ENCODE measurements at regions of chr7 and their contacts with region 1.

Region 1: DNA sequence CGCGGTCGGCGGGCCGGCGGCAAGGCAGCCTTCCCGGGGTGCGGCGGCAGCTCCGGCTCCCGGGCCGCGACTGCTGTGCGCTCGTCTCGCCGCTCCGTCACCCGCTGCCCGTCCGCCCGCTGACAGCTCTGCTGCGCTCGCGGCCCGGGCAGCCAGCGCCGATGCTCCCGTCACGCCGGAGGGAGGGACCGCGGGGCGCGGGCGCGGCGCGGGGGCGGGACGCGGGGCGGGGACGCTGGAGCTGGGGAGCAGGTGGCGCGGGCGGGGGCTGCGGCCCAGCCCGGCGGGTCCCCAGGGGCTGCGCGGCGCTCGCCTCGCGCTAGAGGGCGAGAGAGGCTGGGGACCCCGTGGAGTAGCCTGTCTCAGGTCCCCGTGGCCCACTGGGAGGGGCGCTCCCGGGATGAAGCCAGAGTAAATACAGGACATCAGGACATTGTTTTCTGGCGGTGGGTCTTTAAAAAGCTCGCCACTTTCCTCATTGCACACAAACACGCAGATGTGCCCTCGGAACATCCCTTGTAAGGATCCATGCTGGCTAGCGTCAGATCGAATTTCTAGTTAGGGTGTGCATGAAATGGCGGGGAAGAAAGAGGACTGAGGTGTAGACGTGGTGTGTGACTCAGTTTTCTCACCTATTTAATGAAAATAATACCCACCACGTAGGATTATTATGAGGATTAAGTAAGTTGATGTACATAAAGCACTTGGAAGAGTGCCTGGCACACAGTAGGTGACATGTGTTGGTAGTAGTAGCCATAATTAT is at the start of gene ELAPOR2:
- DNase-seq: peak; percentile 66 to 86
- H3K4me3 ChIP-seq: peak within 1 kb of the TSS; percentile 33
- H3K4me1 ChIP-seq: no peaks in the 10 kb centered on the region
- H3K27me3 ChIP-seq: peaks cover 4% of the 10 kb centered on the region; the same call in 1 of the 2 replicates

Region 2: DNA sequence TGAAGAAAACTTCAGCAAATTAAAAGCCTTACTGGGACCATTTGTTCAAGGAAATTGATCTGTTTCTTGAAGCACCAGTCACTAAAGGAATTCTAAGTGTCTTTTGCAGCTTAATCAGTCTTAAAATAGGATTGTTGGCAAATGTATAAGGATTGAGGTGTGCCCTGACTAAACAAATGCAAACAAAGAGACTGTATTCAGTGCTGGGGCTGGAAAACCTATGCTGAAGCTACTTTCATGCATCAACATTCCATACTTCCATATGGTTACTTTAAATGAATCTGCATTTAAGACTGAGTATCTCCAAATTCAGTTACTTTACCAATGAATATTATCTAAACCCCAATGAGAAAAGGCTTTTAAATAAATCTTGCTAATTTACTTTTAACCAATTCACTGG is 183.6 kb before region 1 on chr7:
- in situ Hi-C with region 1: no loop called
- DNase-seq: no peak
- H3K4me3 ChIP-seq: no peak overlapping the region
- H3K4me1 ChIP-seq: peaks cover 2% of the 10 kb centered on the region; the same call in 1 of the 2 replicates
- H3K27me3 ChIP-seq: no peaks in the 10 kb centered on the region

Region 3: GRCh38 chr7:87225696-87226095 is 166.0 kb after region 1 on chr7:
- in situ Hi-C with region 1: loop called (anchors 25 kb)
- DNase-seq: no peak
- H3K4me3 ChIP-seq: no peak overlapping the region
- H3K4me1 ChIP-seq: peaks cover 1% of the 10 kb centered on the region
- H3K27me3 ChIP-seq: 0 out of 2 replicates have a peak, but pooled peaks cover 7% of the 10 kb centered on the region